Endothelial cell of umbilical vein (primary cell): ENCODE measurements at regions of chr3 and their contacts with region 1.

Region 1: DNA sequence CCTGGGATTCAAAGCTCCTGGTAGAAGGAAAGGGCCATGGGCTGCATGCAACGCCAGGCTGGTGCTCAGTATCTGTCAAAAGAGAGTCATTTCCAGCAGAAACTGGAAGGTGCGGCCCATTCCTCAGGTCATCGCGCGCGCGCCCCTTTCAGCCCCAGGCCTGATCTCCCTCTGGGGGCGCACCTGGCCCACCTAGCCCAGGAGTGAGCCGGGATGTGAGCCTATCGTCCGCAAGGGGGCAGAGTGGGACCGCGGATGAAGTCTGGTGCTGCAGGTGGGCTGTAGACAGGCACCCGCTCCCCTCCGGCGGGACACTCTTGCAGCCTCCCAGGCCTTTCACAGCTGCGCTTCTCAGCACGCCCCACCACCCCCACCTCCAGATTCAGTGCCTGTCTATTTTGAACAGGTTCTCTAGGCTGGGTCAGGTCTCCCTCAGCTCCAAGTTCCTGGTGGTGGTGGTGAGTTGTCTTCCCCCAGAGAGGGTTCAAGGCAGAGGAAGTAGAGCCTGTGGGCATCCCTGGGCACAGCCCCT is 5.8 kb upstream of the RPL29 start:
- DNase-seq: peak; percentile 70
- H3K4me3 ChIP-seq: no peak overlapping the region
- H3K27ac ChIP-seq: no peak overlapping the region
- H3K4me1 ChIP-seq: peaks cover 13% of the 10 kb centered on the region
- H3K27me3 ChIP-seq: no peaks in the 10 kb centered on the region
- CTCF ChIP-seq: peak; percentile 94 to 97
- POLR2A ChIP-seq: no peak

Region 2: DNA sequence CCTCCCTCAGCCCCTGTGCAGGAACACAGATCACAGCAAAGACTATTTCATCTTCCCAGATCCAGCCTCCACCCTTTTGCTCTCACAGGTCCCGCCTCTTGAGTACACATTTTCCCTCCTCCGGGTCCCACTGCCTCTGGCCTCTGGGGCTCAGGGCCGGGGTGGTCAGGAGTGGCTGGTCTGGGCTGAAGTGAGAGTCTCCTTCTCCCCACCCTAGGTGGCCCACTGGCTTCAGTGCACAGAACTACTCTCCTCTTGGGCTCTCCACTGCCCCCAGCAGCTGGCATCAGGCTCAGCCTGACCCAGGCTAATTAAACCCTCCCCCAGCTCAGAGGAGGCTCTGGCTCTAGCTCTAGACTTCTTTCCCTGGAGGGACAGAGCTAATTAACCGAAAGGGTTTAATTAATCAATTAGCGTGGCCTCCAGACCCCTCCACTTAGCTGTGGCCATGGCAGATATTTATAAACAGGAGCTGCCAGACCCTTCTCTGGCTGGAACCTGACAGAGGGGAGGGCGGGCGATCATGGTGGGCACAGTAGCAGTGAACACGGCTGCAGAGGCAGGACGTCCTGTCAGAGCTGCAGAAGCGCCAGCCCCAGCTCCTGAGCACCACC is 39.7 kb after region 1 on chr3:
- CTCF ChIA-PET with region 1: interaction called, 13 read pairs
- POLR2A ChIA-PET with region 1: no interaction called
- dilution Hi-C with region 1: no loop called
- intact Hi-C with region 1: loop called (anchors 2 kb)
- DNase-seq: no peak
- H3K4me3 ChIP-seq: no peak overlapping the region
- H3K27ac ChIP-seq: no peak overlapping the region
- H3K4me1 ChIP-seq: peaks cover 8% of the 10 kb centered on the region
- H3K27me3 ChIP-seq: no peaks in the 10 kb centered on the region
- CTCF ChIP-seq: peak; percentile 10 to 22
- POLR2A ChIP-seq: no peak

Region 3: DNA sequence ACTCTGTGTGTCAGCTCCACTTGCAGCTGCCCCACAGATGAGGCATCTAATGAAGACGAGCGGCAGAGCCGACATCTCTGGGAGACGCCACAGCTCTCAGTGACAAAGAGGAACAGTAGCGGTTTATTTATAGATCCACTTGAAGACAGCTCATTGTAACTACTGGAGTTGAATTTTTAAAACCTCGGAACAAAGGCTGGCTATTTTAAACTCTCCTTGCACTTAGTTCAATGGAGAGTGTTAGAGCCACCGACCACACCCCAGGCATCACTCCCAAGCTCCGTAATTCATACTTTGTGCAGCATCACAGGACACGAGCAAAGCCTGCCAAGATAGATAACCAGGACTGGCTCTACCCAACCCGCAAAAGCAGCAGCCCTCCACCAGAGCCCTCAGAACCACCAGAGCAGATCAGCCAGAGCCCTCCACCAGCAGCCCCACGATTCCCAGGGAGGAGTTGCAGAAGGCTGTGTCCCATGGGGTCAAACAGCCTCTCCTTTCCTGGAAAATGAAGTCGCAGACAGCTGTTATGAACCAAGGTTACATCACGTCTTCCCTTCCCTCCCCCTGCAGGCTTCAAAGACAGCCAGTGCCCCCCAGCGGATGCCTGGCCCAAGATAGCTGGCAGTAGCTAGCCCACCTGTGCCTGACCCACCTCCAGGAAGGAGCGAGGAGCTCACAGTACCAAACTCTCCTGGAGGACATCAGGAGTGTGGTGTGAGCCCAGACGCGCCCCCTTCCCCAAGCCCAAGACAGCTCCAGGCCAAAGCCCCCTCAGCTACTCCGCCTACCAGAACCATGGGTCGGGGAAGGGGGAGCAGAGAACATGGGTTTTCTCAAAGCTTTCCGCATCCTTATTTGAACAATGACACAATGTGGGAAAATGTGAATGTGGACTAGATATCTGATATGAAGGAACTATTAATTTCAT is 107.1 kb after region 1 on chr3:
- CTCF ChIA-PET with region 1: interaction called, 10 read pairs
- POLR2A ChIA-PET with region 1: no interaction called
- dilution Hi-C with region 1: no loop called
- intact Hi-C with region 1: no loop called
- DNase-seq: no peak
- H3K4me3 ChIP-seq: no peak overlapping the region
- H3K27ac ChIP-seq: no peak overlapping the region
- H3K4me1 ChIP-seq: peaks cover 3% of the 10 kb centered on the region
- H3K27me3 ChIP-seq: no peaks in the 10 kb centered on the region
- CTCF ChIP-seq: no peak
- POLR2A ChIP-seq: no peak

Region 4: DNA sequence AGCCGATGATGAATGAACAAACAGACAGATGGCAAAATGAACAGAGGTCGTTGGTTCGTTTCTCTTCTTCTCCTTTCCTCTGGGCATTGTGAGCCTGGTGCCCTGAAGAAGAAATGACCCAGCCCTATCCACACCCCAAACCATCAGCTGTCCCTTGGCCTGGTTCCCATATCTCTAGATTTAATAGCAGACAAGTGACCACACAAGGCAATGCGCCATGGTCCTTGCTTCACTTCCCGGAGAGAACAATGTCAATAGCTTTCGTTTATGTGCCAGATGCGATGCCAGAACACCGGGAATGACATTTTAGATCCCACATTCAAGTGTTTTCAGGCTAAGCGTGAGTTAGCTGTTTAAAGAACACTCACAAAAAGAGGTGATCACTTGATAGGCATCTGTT is 135.0 kb after region 1 on chr3:
- CTCF ChIA-PET with region 1: interaction called, 139 read pairs
- POLR2A ChIA-PET with region 1: no interaction called
- dilution Hi-C with region 1: loop called (anchors 10 kb)
- intact Hi-C with region 1: no loop called
- DNase-seq: peak; percentile 32
- H3K4me3 ChIP-seq: no peak overlapping the region
- H3K27ac ChIP-seq: no peak overlapping the region
- H3K4me1 ChIP-seq: peaks cover 9% of the 10 kb centered on the region
- H3K27me3 ChIP-seq: no peaks in the 10 kb centered on the region
- CTCF ChIP-seq: no peak
- POLR2A ChIP-seq: no peak

Region 5: GRCh38 chr3:52197842-52198668 is 196.5 kb after region 1 on chr3 and contains the start of gene ALAS1:
- CTCF ChIA-PET with region 1: interaction called, 4 read pairs
- POLR2A ChIA-PET with region 1: no interaction called
- dilution Hi-C with region 1: no loop called
- intact Hi-C with region 1: loop called (anchors 5 kb)
- DNase-seq: peak; percentile 93
- H3K4me3 ChIP-seq: peak within 1 kb of the TSS; percentile 89 to 93 (median 91)
- H3K27ac ChIP-seq: peak within 1 kb of the TSS; percentile 62
- H3K4me1 ChIP-seq: peaks cover 17% of the 10 kb centered on the region
- H3K27me3 ChIP-seq: no peaks in the 10 kb centered on the region
- CTCF ChIP-seq: peak in 1 of 2 donors; percentile 26
- POLR2A ChIP-seq: peak; percentile 97
- total RNA-seq, gene ALAS1: 45.1 and 48.1 TPM in 2 replicates